ENCODE measurements at regions of chr19 and their contacts with region 1.

Region 1: DNA sequence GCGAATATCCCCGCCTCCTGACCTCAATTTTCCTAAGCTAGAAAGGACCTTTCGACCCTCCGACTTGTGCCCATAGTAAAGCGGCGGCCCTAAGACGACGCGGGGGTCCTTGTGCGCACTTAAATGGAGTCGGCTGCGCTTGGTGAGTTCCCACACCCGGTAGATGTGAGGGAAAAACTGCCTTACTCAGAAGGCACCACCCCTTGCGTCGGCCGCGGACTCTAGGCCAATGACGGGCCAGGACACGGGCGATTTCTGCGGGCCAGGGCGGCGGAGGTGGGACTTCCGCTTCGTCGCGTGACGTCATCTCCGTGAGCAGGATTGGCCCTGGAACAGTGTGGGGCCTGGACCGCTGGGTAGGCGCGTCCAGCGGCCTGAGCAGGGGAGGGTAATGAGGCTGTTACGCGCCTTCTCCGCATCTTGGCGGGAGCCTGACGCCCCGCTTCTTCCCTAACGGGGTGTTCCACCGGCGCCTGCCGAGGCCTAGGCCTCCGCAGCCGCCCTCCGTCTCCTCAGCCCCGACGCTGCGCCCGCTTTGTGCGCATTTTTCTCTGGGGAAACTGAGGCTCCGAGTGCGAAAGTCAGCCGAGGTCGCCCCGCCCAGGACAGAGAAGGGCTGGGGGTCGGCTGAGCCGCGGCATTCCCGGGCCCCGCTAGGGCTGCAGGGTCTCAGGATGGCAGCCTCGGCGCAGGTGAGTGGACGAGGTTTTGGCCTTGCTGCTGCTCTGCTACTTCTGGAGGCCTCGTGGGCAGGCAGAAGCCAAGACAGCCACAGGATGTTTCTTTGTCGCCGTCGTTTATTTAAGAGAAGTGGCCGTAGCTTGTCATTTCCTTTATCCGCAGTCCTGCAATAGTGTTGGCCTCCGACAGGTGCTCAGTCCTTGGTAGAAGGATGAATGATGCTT is at the start of gene ZNF543:
- DNase-seq: peak; percentile 90
- ATAC-seq: peak; percentile 97
- H3K4me3 Mint-ChIP-seq: peak within 1 kb of the TSS; percentile 95
- H3K27ac Mint-ChIP-seq: peak within 1 kb of the TSS; percentile 98
- H3K4me1 Mint-ChIP-seq: peaks cover 30% of the 10 kb centered on the region
- H3K27me3 Mint-ChIP-seq: peaks cover 17% of the 10 kb centered on the region
- CTCF ChIP-seq: no peak
- total RNA-seq, gene ZNF543: 14.0 and 16.1 TPM in 2 replicates

Region 2: GRCh38 chr19:56864443-56865125 is 455.8 kb before region 1 on chr19:
- CTCF ChIA-PET with region 1: no interaction called
- POLR2A ChIA-PET with region 1: no interaction called
- intact Hi-C with region 1: no loop called
- DNase-seq: no peak
- ATAC-seq: no peak
- H3K4me3 Mint-ChIP-seq: no peak overlapping the region
- H3K27ac Mint-ChIP-seq: no peak overlapping the region
- H3K4me1 Mint-ChIP-seq: no peaks in the 10 kb centered on the region
- H3K27me3 Mint-ChIP-seq: no peaks in the 10 kb centered on the region
- CTCF ChIP-seq: no peak

Region 3: DNA sequence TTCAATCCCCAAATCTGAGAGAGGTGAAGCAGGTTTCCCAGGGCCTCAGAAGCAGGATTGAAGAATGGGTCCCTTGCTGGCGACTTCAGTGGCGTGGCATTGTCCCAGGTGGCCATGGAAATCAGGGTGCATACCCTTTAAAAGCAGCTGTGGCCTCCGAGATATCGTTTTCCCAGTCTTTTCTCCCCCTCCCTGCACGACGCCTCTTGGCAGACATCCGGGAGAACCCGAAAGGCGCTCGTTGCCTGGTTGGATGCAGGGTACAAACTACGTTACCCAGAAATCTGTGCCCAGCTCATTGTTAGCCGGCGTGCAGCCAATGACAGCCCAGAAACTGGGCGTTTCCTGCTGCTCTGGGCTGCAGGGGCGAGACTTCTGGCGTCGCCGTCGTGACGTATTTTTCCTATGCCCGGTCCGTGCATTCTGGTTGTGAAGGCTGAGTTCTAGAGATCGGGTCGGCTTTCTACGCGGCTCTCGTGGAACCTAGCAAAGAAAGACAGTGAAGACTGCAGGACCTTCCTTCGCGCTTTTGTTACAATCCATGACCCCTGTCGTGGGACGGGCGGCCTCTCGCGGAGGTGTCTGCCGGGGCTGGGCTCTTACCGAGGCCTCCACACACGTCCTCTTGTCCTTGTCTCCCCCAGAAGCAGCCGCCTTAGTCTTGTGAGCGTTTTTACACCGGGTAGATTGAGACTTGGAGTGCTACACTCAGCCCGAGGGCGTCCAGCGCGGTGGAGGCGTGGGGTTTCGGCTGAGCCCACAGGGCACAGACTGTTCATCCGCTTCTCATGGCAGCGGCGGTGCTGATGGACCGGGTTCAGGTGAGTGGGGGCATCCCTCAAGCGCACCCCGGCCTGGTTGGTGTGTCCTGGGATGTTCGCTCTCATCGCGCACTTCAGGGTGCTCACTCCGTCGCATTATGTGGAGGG is 30.7 kb after region 1 on chr19 and contains the start of gene ZNF304:
- CTCF ChIA-PET with region 1: no interaction called
- POLR2A ChIA-PET with region 1: interaction called, 6 read pairs
- intact Hi-C with region 1: loop called (anchors 1 kb)
- DNase-seq: peak; percentile 66
- ATAC-seq: peak; percentile 100
- H3K4me3 Mint-ChIP-seq: peak within 1 kb of the TSS; percentile 94
- H3K27ac Mint-ChIP-seq: peak within 1 kb of the TSS; percentile 78
- H3K4me1 Mint-ChIP-seq: peaks cover 33% of the 10 kb centered on the region
- H3K27me3 Mint-ChIP-seq: peaks cover 3% of the 10 kb centered on the region
- CTCF ChIP-seq: no peak
- total RNA-seq, gene ZNF304: 12.4 and 13.5 TPM in 2 replicates

Measured in activated B cell treated with CpG ODN at 0.5 μM for 24 hours (primary cell).